Posterior vena cava (tissue), 2 donors: ENCODE measurements at regions of chr12 and their contacts with region 1.

Region 1: DNA sequence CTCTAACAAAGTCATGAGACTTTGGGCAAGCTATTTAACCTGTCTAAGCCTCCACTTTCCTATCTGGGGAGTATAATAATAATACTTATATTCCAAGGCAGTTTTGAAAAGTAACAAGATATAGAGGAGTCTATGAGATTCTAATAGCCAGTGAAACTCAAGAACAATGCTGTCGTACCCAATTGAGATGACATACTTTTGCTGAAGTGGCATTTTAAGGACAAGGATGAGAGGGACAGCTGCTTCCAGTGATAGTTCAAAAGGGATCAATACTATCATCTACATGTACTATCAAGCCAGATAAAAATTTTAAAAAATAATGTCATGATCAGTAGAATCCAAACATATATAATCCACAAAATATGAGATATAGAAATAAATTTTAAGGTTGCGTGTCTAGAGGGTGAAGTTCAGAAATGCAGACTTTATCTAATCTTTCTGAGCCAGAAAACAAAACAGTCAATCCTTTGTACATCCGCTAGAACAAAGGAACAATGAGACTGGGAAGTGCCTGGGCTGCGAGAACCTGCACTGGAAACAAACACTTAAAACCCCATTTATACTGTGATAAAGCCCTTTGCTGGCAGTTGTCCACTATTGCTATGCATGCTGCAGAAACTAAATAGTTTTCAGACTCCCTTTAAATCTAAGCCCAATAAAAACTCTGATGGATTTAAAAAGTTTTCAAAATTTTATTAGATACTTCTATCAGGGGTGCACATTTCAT is 38.6 kb downstream of the PTPRB start:
- DNase-seq: no peak

Region 2: GRCh38 chr12:69428351-69429065 is 1170.1 kb before region 1 on chr12:
- intact Hi-C with region 1: loop called in 1 of 2 experiments (anchors 5 kb)
- DNase-seq: no peak

Region 3: GRCh38 chr12:70178038-70178437 is 420.6 kb before region 1 on chr12:
- intact Hi-C with region 1: no loop called
- DNase-seq: no peak

Region 4: GRCh38 chr12:71999795-72000194 is 1401.2 kb after region 1 on chr12:
- intact Hi-C with region 1: loop called in 1 of 2 experiments (anchors 5 kb)
- DNase-seq: no peak